ENCODE measurements at regions of chr2 and their contacts with region 1.

Region 1: GRCh38 chr2:65576861-65577601 is 144.6 kb upstream of the SPRED2 start:
- DNase-seq: peak; percentile 91
- ATAC-seq: peak; percentile 91
- H3K4me3 ChIP-seq: peak overlapping the region in 2 of 3 experiments; percentile 13 to 23; a peak in 1 of 6 replicates
- H3K27ac ChIP-seq: no peak overlapping the region
- H3K4me1 ChIP-seq: peaks cover 19% of the 10 kb centered on the region
- H3K27me3 ChIP-seq: no peaks in the 10 kb centered on the region
- CTCF ChIP-seq: no peak
- EP300 ChIP-seq: peak in 1 of 2 experiments; percentile 74; a peak in 1 of 4 replicates
- POLR2A ChIP-seq: no peak
- RAD21 ChIP-seq: no peak

Region 2: DNA sequence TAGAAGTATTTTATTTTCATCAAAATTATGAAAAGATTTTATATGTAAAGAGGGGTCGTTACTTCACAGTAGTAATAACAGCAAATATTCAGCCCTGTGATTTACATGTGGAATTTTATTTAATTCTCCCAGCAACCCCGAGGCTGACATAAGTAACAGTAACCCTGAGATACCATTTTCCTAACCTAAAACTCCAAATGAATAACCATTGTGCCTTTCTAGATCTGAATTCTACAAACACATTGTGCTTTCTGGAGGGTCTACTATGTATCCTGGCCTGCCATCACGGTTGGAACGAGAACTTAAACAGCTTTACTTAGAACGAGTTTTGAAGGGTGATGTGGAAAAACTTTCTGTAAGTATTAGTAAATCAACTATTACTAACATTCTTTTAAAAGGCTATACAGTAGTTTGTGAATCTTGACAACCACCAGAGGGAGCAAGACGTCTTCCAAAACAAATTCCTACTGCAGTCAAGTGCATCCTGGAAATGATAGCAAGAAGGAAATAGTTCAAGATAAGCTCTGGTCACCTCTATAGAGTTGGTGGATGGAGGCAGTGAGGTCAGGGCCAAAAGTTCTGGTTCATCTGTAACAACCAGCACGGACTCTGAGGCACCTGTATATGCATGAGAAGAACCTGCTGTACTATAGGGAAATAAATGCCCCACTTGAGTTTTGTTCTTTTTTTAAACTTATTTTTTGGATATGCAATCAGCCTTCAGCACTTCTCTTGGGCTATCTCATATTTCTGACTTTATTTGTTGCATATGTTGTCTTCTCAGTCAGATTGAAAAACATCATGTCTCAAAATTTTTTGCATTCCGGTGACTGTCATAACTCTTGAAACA is 312.0 kb before region 1 on chr2:
- CTCF ChIA-PET with region 1: interaction called, 31 read pairs
- POLR2A ChIA-PET with region 1: no interaction called
- in situ Hi-C with region 1: no loop called
- intact Hi-C with region 1: loop called (anchors 1 kb)
- DNase-seq: peak; percentile 84
- ATAC-seq: peak; percentile 79
- H3K4me3 ChIP-seq: no peak overlapping the region
- H3K27ac ChIP-seq: no peak overlapping the region
- H3K4me1 ChIP-seq: no peaks in the 10 kb centered on the region
- H3K27me3 ChIP-seq: no peaks in the 10 kb centered on the region
- CTCF ChIP-seq: peak; percentile 87
- EP300 ChIP-seq: no peak
- POLR2A ChIP-seq: no peak
- RAD21 ChIP-seq: peak; percentile 84; the same call in 1 of the 2 replicates

Region 3: GRCh38 chr2:65589667-65590066 is 12.6 kb after region 1 on chr2:
- CTCF ChIA-PET with region 1: no interaction called
- POLR2A ChIA-PET with region 1: no interaction called
- in situ Hi-C with region 1: no loop called
- intact Hi-C with region 1: no loop called
- DNase-seq: no peak
- ATAC-seq: no peak
- H3K4me3 ChIP-seq: no peak overlapping the region
- H3K27ac ChIP-seq: no peak overlapping the region
- H3K4me1 ChIP-seq: peaks cover 7% of the 10 kb centered on the region
- H3K27me3 ChIP-seq: no peaks in the 10 kb centered on the region
- CTCF ChIP-seq: no peak
- EP300 ChIP-seq: no peak
- POLR2A ChIP-seq: no peak
- RAD21 ChIP-seq: no peak